ENCODE measurements at regions of chrX and their contacts with region 1.

Region 1: DNA sequence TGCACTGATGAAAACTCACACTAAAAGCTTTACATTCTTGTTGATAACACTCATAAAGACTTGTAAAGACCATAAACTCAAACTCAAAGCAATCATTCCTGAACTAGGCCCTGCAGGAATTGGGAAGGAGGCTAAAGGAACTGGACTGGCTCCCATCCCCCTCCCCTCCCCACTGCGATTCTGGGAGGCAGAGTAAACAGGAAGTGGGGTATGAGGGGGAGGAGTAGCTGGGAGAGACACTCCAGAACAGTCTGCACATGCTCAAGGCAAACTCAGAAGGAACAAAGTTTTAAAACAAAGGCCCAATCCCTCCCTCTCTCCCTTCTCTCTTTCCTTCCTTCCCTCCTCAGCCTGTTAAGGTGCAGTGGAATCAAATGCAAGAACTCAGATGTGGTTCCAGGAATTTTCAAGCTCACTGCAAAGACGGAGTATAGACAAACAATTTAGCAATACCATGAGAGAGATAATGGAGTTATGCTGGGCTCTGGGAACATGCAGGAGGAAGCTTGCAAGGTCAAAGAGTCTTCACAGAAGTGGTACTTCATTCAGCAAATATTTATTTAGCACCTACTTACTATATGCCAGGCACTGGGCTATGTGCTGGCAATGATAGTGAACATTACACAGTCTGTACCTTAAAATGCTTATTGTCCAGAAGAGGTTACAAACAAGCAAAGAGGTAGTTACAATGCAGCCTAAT is 15.9 kb downstream of the MID1IP1 start:
- DNase-seq: peak; percentile 43
- ATAC-seq: peak; percentile 94
- H3K4me3 ChIP-seq: no peak overlapping the region
- H3K27ac ChIP-seq: peak overlapping the region; percentile 66; the same call in 1 of the 2 replicates
- H3K4me1 ChIP-seq: peaks cover 7% of the 10 kb centered on the region
- H3K27me3 ChIP-seq: peaks cover 2% of the 10 kb centered on the region; the same call in 1 of the 2 replicates
- CTCF ChIP-seq: no peak
- POLR2A ChIP-seq: no peak
- RAD21 ChIP-seq: no peak

Region 2: GRCh38 chrX:37765507-37765906 is 1051.6 kb before region 1 on chrX:
- CTCF ChIA-PET with region 1: no interaction called
- POLR2A ChIA-PET with region 1: no interaction called
- dilution Hi-C with region 1: no loop called
- in situ Hi-C with region 1: no loop called
- intact Hi-C with region 1: no loop called
- DNase-seq: no peak
- ATAC-seq: no peak
- H3K4me3 ChIP-seq: no peak overlapping the region
- H3K27ac ChIP-seq: no peak overlapping the region
- H3K4me1 ChIP-seq: no peaks in the 10 kb centered on the region
- H3K27me3 ChIP-seq: peaks cover 1% of the 10 kb centered on the region; the same call in 1 of the 2 replicates
- CTCF ChIP-seq: no peak
- POLR2A ChIP-seq: no peak
- RAD21 ChIP-seq: no peak

Region 3: DNA sequence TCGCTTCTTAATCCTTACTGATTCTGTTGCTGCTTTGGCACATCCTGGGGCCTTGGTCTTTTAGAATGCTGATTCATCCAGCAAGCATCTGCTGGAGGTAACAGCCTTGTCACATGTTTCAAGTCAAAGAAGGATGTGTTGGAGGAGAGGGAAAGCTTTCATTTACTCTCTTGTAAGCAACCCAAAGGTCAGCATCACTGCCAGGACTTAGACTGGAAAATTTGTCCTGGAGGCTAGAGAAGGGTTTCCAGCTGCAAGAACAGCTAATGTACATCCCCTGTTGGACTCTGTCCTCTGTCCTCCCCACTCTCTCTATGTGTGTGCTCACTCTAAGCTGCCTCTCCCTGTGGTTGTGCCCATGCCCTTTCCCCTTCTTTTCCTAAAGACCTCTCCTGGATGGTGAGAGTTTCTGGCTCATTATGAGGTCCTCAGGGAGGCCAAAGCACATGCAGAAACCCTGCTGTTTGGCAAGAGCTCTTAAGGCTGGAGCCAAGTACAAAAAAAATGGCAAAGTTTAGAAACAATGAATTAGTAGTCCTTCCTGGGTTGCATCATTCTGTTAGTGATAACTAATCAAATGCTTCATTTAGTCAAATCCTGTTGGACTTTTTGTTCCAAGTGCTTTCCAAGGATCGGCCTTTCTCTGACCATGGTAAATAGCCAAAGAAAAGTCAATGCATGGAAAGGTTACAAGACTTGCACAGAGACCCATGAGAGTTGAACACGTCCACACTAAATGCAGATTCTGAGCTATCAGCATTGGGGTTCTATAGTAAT is 583.1 kb before region 1 on chrX:
- CTCF ChIA-PET with region 1: no interaction called
- POLR2A ChIA-PET with region 1: no interaction called
- dilution Hi-C with region 1: no loop called
- in situ Hi-C with region 1: no loop called
- intact Hi-C with region 1: no loop called
- DNase-seq: peak; percentile 73
- ATAC-seq: peak; percentile 73
- H3K4me3 ChIP-seq: no peak overlapping the region
- H3K27ac ChIP-seq: peak overlapping the region; percentile 83; the same call in 1 of the 2 replicates
- H3K4me1 ChIP-seq: peaks cover 5% of the 10 kb centered on the region
- H3K27me3 ChIP-seq: no peaks in the 10 kb centered on the region
- CTCF ChIP-seq: no peak
- POLR2A ChIP-seq: no peak
- RAD21 ChIP-seq: no peak

Region 4: GRCh38 chrX:38879631-38880220 is 62.6 kb after region 1 on chrX:
- CTCF ChIA-PET with region 1: no interaction called
- POLR2A ChIA-PET with region 1: no interaction called
- dilution Hi-C with region 1: no loop called
- in situ Hi-C with region 1: no loop called
- intact Hi-C with region 1: loop called (anchors 5 kb)
- DNase-seq: no peak
- ATAC-seq: no peak
- H3K4me3 ChIP-seq: no peak overlapping the region
- H3K27ac ChIP-seq: no peak overlapping the region
- H3K4me1 ChIP-seq: no peaks in the 10 kb centered on the region
- H3K27me3 ChIP-seq: peaks cover 1% of the 10 kb centered on the region; the same call in 1 of the 2 replicates
- CTCF ChIP-seq: no peak
- POLR2A ChIP-seq: no peak
- RAD21 ChIP-seq: no peak